Spleen (tissue), 13 donors: ENCODE measurements at regions of chr1 and their contacts with region 1.

Region 1: DNA sequence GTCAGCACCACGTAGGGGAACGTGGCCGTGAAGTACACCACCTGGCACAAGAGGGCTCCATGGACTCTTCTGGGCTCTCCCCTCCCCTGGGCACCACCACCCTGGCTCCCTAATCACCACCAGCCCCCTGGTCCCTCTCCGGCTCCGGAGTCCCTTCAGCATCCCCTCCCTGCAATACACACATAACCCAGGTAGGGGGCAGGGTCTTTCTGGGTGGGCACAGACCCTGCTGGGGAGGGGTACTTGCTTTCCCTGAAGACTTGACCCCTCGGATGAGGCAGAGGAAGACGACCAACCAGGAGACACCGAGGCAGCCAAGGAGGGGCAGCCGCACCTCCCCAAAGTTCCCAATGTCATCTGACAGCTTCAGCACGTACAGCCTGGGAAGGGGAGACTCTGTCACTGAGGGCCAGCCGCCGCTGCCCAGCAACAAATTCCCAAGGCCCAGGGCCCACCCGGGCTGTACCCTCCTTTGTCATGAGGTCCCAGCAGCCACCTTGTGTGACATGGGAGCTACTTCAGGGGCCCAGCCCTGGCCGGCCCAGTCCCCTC is 11.3 kb downstream of the CCDC24 start:
- DNase-seq: no peak
- H3K4me3 ChIP-seq: no peak overlapping the region
- H3K27ac ChIP-seq: no peak overlapping the region
- H3K4me1 ChIP-seq: peaks cover 0 to 7% (median 3%) of the 10 kb centered on the region in 6 donors
- H3K27me3 ChIP-seq: no peaks in the 10 kb centered on the region
- CTCF ChIP-seq: no peak
- POLR2A ChIP-seq: no peak

Region 2: GRCh38 chr1:44040846-44041245 is 38.2 kb after region 1 on chr1:
- intact Hi-C with region 1: loop called (anchors 2 kb)
- DNase-seq: no peak
- H3K4me3 ChIP-seq: no peak overlapping the region
- H3K27ac ChIP-seq: no peak overlapping the region
- H3K4me1 ChIP-seq: peaks cover 0 to 12% (median 9%) of the 10 kb centered on the region in 6 donors
- H3K27me3 ChIP-seq: no peaks in the 10 kb centered on the region
- CTCF ChIP-seq: no peak
- POLR2A ChIP-seq: no peak